Transverse colon (tissue), 4 donors: ENCODE measurements at regions of chr5 and their contacts with region 1.

Region 1: GRCh38 chr5:157575381-157576020 is at the start of gene ADAM19:
- DNase-seq: peak; percentile 59
- H3K4me3 ChIP-seq: peak within 1 kb of the TSS; percentile 58 to 71 (median 65)
- H3K27ac ChIP-seq: peak within 1 kb of the TSS; percentile 87 to 93 (median 91)
- H3K4me1 ChIP-seq: peaks cover 0 to 42% (median 18%) of the 10 kb centered on the region in 4 donors
- H3K27me3 ChIP-seq: peaks cover 7% of the 10 kb centered on the region
- CTCF ChIP-seq: peak in 3 of 5 experiments; percentile 9 to 34 (median 25)
- EP300 ChIP-seq: no peak
- POLR2A ChIP-seq: peak; percentile 63
- total RNA-seq, gene ADAM19: 4.0 to 28.1 (median 15.1) TPM

Region 2: GRCh38 chr5:157328277-157328912 is 247.1 kb before region 1 on chr5:
- in situ Hi-C with region 1: no loop called
- intact Hi-C with region 1: loop called (anchors 10 kb)
- DNase-seq: peak; percentile 58
- H3K4me3 ChIP-seq: peak overlapping the region in 3 of 4 donors; percentile 8 to 12 (median 11)
- H3K27ac ChIP-seq: peak overlapping the region; percentile 4 to 70 (median 25)
- H3K4me1 ChIP-seq: peaks cover 0 to 9% (median 5%) of the 10 kb centered on the region in 4 donors
- H3K27me3 ChIP-seq: no peaks in the 10 kb centered on the region
- CTCF ChIP-seq: peak; percentile 86 to 92 (median 90)
- EP300 ChIP-seq: no peak
- POLR2A ChIP-seq: no peak

Region 3: DNA sequence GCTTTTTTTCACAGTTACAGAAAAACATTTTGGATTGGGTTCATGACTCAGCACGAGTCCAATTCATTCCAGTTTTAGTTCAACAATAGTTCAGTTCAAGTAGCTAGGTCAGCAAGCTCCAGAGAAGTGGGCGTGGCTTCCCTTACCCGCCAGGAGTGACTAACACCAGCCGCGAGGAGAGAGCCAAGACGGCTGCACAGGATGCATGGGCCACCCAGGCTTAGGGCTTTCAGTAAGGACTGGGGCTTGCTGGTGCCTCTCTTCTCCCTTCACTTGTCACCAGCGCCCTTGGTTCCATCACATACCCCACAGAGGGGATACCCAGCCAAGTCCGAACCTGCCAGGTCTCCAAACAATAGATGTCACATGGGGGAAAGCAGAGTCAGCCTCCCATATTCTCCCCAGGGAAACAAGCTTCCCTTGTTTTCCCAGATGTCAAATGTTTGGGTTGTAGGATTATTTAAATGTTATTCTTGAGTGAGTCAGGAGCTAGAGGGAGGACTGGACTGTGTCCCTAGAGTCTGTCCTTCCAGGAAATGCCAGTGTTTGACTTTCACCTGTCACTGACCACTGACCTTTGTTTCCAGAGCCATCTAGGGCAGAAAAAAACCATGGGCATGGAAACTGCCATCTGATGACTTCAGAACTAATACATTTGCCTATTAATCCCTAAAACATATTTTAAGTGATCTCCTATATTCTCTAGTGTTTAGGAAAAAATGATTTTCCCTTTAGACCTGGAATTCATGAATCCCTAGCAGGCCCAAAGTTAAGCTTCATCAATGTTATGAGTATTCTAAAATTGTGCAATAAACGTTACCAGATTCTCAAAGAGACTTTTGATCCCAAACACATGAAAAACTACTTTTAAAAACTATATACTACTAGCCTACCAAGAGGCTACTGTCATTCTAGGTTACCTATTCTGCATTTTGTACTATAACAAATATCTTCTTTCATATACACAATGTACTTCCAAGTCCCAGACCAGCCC is 63.6 kb before region 1 on chr5:
- in situ Hi-C with region 1: no loop called
- intact Hi-C with region 1: loop called (anchors 5 kb)
- DNase-seq: peak; percentile 80
- H3K4me3 ChIP-seq: no peak overlapping the region
- H3K27ac ChIP-seq: peak overlapping the region; percentile 70 to 82 (median 78)
- H3K4me1 ChIP-seq: peaks cover 5 to 52% (median 35%) of the 10 kb centered on the region in 4 donors
- H3K27me3 ChIP-seq: no peaks in the 10 kb centered on the region
- CTCF ChIP-seq: no peak
- EP300 ChIP-seq: no peak
- POLR2A ChIP-seq: no peak